Right cardiac atrium (tissue), 5 donors: ENCODE measurements at regions of chr3 and their contacts with region 1.

Region 1: GRCh38 chr3:171309906-171310359 is 150.3 kb downstream of the TNIK start:
- DNase-seq: no peak
- ATAC-seq: peak in 1 of 2 donors; percentile 47
- H3K4me3 ChIP-seq: no peak overlapping the region
- H3K27ac ChIP-seq: no peak overlapping the region
- H3K4me1 ChIP-seq: no peaks in the 10 kb centered on the region
- H3K27me3 ChIP-seq: no peaks in the 10 kb centered on the region

Region 2: DNA sequence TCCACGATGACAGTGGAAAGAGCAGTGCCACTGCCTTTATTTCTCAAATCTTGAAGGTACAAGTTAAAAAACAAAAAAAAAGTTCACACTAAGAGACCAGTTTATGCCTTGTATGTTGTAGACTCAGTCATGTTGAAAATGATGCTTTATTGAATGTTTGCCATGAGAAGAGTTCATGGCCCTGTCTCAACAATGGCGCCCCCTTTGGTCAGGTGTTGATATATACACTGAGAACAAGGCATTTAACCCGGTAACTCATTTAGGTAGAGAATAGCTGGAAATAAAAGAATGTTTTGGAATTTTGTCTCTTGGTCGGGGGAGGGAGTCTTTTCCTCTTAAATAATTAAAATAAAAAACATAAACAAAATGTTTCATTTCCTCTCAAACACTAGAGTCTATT is 137.9 kb before region 1 on chr3:
- intact Hi-C with region 1: loop called in 1 of 4 experiments (anchors 10 kb)
- DNase-seq: no peak
- ATAC-seq: no peak
- H3K4me3 ChIP-seq: no peak overlapping the region
- H3K27ac ChIP-seq: no peak overlapping the region
- H3K4me1 ChIP-seq: peaks cover 7% of the 10 kb centered on the region
- H3K27me3 ChIP-seq: no peaks in the 10 kb centered on the region